Mammary epithelial cell (primary cell): ENCODE measurements at regions of chr9 and their contacts with region 1.

Region 1: GRCh38 chr9:130107234-130107861 is 53.6 kb downstream of the GPR107 start:
- DNase-seq: peak; percentile 52
- H3K4me3 ChIP-seq: no peak overlapping the region
- H3K27ac ChIP-seq: no peak overlapping the region
- H3K4me1 ChIP-seq: no peaks in the 10 kb centered on the region
- H3K27me3 ChIP-seq: no peaks in the 10 kb centered on the region
- CTCF ChIP-seq: peak; percentile 79 to 80

Region 2: DNA sequence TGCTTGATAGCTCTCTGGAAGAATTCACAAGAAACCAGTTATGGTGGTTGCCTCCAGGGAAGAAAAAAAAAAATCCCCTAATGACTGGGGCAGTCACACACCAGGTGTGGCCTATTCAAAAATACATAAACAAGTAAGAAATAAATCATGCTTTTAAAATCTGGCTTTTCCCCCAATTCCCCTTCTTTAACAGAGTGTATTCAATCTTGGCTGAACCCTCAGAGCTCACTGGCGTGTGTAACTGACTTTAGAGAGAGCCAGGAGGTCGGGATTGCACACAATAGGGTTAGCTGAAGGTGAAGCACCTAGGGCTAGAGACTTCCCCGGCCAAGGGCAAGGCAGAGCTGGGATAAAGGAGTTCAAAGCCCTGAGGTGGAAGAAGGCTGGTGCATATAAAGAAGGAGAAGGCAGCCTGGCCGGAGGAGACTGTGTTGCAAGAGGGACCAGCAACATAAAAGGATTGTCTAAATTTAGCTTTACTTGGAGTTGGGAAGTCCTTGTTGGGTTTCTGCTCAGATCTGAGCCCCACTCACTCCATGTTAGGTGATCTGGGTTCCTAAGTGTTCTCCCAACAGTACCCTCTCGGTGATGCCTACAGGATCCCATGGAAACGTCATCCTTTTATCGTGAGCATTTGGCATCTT is 84.1 kb before region 1 on chr9:
- CTCF ChIA-PET with region 1: no interaction called
- dilution Hi-C with region 1: loop called (anchors 5 kb)
- in situ Hi-C with region 1: no loop called
- intact Hi-C with region 1: no loop called
- DNase-seq: peak; percentile 55
- H3K4me3 ChIP-seq: no peak overlapping the region
- H3K27ac ChIP-seq: no peak overlapping the region
- H3K4me1 ChIP-seq: no peaks in the 10 kb centered on the region
- H3K27me3 ChIP-seq: no peaks in the 10 kb centered on the region
- CTCF ChIP-seq: no peak

Region 3: DNA sequence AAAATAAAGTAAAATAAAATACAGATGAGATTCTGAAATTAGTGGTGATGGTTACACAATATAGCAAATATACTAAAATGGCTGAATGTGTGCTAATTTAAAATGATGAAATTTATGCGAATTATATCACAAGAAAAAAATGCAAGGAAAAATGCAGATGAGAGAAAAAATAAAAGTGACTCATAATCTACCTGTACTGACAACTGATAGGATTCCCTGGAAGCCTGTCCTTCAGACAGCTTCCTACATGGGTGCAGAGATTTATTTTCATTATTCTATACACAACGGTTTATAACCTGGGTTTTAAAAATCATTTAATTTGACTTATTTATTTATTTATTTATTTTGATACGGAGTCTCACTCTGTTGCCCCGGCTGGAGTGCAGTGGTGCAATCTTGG is 59.1 kb after region 1 on chr9:
- CTCF ChIA-PET with region 1: no interaction called
- dilution Hi-C with region 1: no loop called
- in situ Hi-C with region 1: no loop called
- intact Hi-C with region 1: no loop called
- DNase-seq: no peak
- H3K4me3 ChIP-seq: no peak overlapping the region
- H3K27ac ChIP-seq: no peak overlapping the region
- H3K4me1 ChIP-seq: peaks cover 2% of the 10 kb centered on the region
- H3K27me3 ChIP-seq: no peaks in the 10 kb centered on the region
- CTCF ChIP-seq: no peak

Region 4: DNA sequence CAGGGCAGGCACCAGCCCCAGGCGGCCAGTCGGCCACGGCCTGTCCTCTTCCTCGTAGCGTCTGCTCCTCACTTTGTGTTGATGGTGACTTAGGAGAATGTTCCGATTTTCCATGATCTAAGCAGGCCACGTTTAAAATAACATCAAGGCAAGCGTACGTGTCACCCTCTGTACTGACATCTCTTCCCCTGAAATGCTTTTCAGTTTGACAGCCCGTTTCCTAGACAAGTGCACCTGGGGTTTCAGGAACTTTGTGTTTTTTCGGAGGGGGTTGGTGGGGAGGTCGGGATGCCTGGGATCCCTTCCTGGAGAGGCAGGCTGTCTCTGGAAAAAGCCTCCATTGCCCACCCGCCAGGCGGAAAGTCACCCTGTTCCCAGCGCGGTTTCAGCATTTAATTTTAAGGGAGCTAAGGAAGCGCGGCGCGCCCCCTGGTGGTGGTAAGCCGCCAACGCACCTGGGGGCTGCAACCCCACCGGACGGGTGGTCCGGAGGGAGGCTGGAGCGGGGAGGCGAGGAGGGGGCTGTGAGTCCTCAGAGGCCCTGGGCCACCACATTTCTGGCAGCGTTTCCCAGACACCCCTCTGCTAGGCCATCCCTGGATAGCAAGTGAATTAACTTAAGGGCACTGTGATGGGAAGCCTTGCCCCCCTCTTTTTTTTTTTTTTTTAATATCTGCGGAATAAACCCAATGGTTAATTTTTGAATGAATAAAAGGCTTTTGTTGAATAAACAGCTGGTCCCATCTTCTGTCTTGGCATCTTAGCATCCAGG is 128.7 kb after region 1 on chr9:
- CTCF ChIA-PET with region 1: no interaction called
- dilution Hi-C with region 1: no loop called
- in situ Hi-C with region 1: loop called in 1 of 2 experiments (anchors 5 kb)
- intact Hi-C with region 1: loop called (anchors 1 kb)
- DNase-seq: peak; percentile 17
- H3K4me3 ChIP-seq: no peak overlapping the region
- H3K27ac ChIP-seq: no peak overlapping the region
- H3K4me1 ChIP-seq: no peaks in the 10 kb centered on the region
- H3K27me3 ChIP-seq: no peaks in the 10 kb centered on the region
- CTCF ChIP-seq: peak; percentile 65 to 96

Region 5: GRCh38 chr9:130263601-130264413 is 156.5 kb after region 1 on chr9:
- CTCF ChIA-PET with region 1: no interaction called
- dilution Hi-C with region 1: loop called (anchors 5 kb)
- in situ Hi-C with region 1: no loop called
- intact Hi-C with region 1: no loop called
- DNase-seq: no peak
- H3K4me3 ChIP-seq: no peak overlapping the region
- H3K27ac ChIP-seq: no peak overlapping the region
- H3K4me1 ChIP-seq: peaks cover 11% of the 10 kb centered on the region
- H3K27me3 ChIP-seq: peaks cover 15% of the 10 kb centered on the region
- CTCF ChIP-seq: peak in 1 of 2 donors; percentile 26

Region 6: GRCh38 chr9:130451509-130452388 is 344.4 kb after region 1 on chr9:
- CTCF ChIA-PET with region 1: no interaction called
- dilution Hi-C with region 1: no loop called
- in situ Hi-C with region 1: no loop called
- intact Hi-C with region 1: loop called (anchors 2 kb)
- DNase-seq: peak; percentile 84
- H3K4me3 ChIP-seq: no peak overlapping the region
- H3K27ac ChIP-seq: no peak overlapping the region
- H3K4me1 ChIP-seq: peaks cover 28% of the 10 kb centered on the region
- H3K27me3 ChIP-seq: no peaks in the 10 kb centered on the region
- CTCF ChIP-seq: peak; percentile 62 to 68